ENCODE measurements at regions of chr3 and their contacts with region 1.

Region 1: GRCh38 chr3:79361748-79362378 is 405.9 kb downstream of the ROBO1 start:
- DNase-seq: peak; percentile 0
- ATAC-seq: no peak
- H3K4me3 ChIP-seq: no peak overlapping the region
- H3K27ac ChIP-seq: no peak overlapping the region
- H3K4me1 ChIP-seq: no peaks in the 10 kb centered on the region; a peak in 1 of 4 replicates
- H3K27me3 ChIP-seq: no peaks in the 10 kb centered on the region
- CTCF ChIP-seq: peak in 2 of 3 experiments; percentile 41 to 56; a peak in 4 of 6 replicates
- POLR2A ChIP-seq: no peak
- RAD21 ChIP-seq: peak; percentile 21; the same call in 1 of the 2 replicates

Region 2: GRCh38 chr3:78659386-78659987 is 702.4 kb before region 1 on chr3:
- CTCF ChIA-PET with region 1: no interaction called
- POLR2A ChIA-PET with region 1: no interaction called
- RAD21 ChIA-PET with region 1: no interaction called
- intact Hi-C with region 1: loop called (anchors 1 kb)
- DNase-seq: peak; percentile 2
- ATAC-seq: no peak
- H3K4me3 ChIP-seq: no peak overlapping the region
- H3K27ac ChIP-seq: no peak overlapping the region
- H3K4me1 ChIP-seq: no peaks in the 10 kb centered on the region
- H3K27me3 ChIP-seq: no peaks in the 10 kb centered on the region
- CTCF ChIP-seq: peak; percentile 14 to 44 (median 32); a peak in 3 of 6 replicates
- POLR2A ChIP-seq: no peak
- RAD21 ChIP-seq: peak; percentile 38

Region 3: DNA sequence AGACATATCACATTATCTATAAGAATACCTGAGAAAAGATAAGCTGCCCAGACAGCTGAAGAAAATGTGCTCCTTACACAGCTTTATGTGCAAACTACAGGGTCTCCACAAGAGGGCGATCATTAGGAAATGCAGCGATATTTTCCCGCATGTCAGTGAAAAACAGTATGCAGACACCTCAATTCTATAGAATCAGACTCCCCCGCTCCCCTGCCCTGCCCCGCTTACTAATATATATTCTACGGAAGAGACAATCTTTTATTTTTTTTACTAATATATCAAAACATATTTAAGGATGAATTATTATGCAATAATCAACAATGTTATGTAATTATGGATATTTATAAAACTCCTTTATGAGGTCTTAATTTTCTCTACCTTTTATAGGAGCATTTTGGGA is 275.3 kb before region 1 on chr3:
- CTCF ChIA-PET with region 1: interaction called, 5 read pairs
- POLR2A ChIA-PET with region 1: no interaction called
- RAD21 ChIA-PET with region 1: no interaction called
- intact Hi-C with region 1: loop called (anchors 5 kb)
- DNase-seq: peak; percentile 8
- ATAC-seq: no peak
- H3K4me3 ChIP-seq: no peak overlapping the region
- H3K27ac ChIP-seq: no peak overlapping the region
- H3K4me1 ChIP-seq: no peaks in the 10 kb centered on the region
- H3K27me3 ChIP-seq: no peaks in the 10 kb centered on the region
- CTCF ChIP-seq: peak in 2 of 3 experiments; percentile 56 to 57; a peak in 4 of 6 replicates
- POLR2A ChIP-seq: no peak
- RAD21 ChIP-seq: no peak

Region 4: GRCh38 chr3:79203144-79203519 is 158.7 kb before region 1 on chr3:
- CTCF ChIA-PET with region 1: no interaction called
- POLR2A ChIA-PET with region 1: no interaction called
- RAD21 ChIA-PET with region 1: no interaction called
- intact Hi-C with region 1: no loop called
- DNase-seq: no peak
- ATAC-seq: no peak
- H3K4me3 ChIP-seq: no peak overlapping the region
- H3K27ac ChIP-seq: no peak overlapping the region
- H3K4me1 ChIP-seq: no peaks in the 10 kb centered on the region
- H3K27me3 ChIP-seq: no peaks in the 10 kb centered on the region
- CTCF ChIP-seq: no peak
- POLR2A ChIP-seq: no peak
- RAD21 ChIP-seq: no peak

Measured in HCT116 (cell line).